Activated B cell treated with CpG ODN at 0.5 μM for 24 hours (primary cell): ENCODE measurements at regions of chr12 and their contacts with region 1.

Region 1: GRCh38 chr12:122203301-122204166 is at the start of gene B3GNT4:
- DNase-seq: peak; percentile 57
- ATAC-seq: peak; percentile 71
- H3K4me3 Mint-ChIP-seq: peak within 1 kb of the TSS; percentile 80
- H3K27ac Mint-ChIP-seq: no peak within 1 kb of the TSS
- H3K4me1 Mint-ChIP-seq: peaks cover 7% of the 10 kb centered on the region
- H3K27me3 Mint-ChIP-seq: peaks cover 24% of the 10 kb centered on the region
- CTCF ChIP-seq: no peak
- total RNA-seq, gene B3GNT4: not detected in 2 replicates

Region 2: GRCh38 chr12:122184517-122184916 is 19.0 kb before region 1 on chr12:
- CTCF ChIA-PET with region 1: interaction called, 3 read pairs
- POLR2A ChIA-PET with region 1: no interaction called
- intact Hi-C with region 1: loop called (anchors 2 kb)
- DNase-seq: no peak
- ATAC-seq: peak; percentile 27
- H3K4me3 Mint-ChIP-seq: peak overlapping the region; percentile 66
- H3K27ac Mint-ChIP-seq: no peak overlapping the region
- H3K4me1 Mint-ChIP-seq: peaks cover 20% of the 10 kb centered on the region
- H3K27me3 Mint-ChIP-seq: no peaks in the 10 kb centered on the region
- CTCF ChIP-seq: no peak